ENCODE measurements at regions of chr14 and their contacts with region 1.

Region 1: DNA sequence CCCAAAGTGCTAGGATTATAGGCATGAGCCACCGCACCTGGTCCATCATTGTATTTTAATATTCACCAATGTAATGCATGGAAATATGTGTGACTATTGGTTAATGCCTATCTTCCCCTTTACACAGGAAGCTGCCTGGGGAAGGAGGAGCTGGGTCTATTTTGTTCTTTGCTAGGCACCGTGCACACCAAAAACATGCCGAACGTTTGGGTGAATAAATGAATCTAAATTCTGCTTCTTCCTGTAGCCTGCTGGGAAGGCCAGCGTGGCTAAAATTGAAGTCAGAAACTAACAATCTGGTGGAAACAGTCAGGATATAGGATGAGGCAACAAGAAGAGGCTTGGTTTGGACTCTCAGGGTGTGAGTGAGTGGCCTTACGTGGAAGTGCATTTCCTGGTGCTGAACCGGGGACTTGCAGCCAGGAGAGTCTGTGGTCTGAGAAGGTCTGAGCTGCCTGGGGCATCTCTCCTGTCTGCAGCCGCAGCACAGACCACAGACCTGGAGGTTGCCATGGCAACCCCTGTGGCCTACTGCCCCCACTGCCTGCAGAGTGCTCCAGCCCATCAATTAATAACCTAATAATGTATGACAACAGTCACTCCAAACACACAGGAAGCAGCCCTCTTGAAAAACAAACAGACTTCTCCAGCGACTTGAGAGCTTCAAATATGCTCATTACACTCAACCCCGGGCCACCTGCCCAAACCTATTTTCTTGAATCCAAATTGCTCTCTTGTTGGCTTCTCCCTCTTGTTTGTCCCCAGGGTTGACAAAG is 5.5 kb upstream of the GPR68 start:
- DNase-seq: peak; percentile 61
- H3K4me3 Mint-ChIP-seq: peak overlapping the region; percentile 70
- H3K27ac Mint-ChIP-seq: peak overlapping the region; percentile 93
- H3K4me1 Mint-ChIP-seq: peaks cover 80% of the 10 kb centered on the region
- H3K27me3 Mint-ChIP-seq: no peaks in the 10 kb centered on the region

Region 2: GRCh38 chr14:91021991-91022621 is 227.9 kb before region 1 on chr14:
- intact Hi-C with region 1: loop called (anchors 1 kb)
- DNase-seq: no peak
- H3K4me3 Mint-ChIP-seq: peak overlapping the region; percentile 76
- H3K27ac Mint-ChIP-seq: peak overlapping the region; percentile 94
- H3K4me1 Mint-ChIP-seq: peaks cover 83% of the 10 kb centered on the region
- H3K27me3 Mint-ChIP-seq: no peaks in the 10 kb centered on the region

Region 3: DNA sequence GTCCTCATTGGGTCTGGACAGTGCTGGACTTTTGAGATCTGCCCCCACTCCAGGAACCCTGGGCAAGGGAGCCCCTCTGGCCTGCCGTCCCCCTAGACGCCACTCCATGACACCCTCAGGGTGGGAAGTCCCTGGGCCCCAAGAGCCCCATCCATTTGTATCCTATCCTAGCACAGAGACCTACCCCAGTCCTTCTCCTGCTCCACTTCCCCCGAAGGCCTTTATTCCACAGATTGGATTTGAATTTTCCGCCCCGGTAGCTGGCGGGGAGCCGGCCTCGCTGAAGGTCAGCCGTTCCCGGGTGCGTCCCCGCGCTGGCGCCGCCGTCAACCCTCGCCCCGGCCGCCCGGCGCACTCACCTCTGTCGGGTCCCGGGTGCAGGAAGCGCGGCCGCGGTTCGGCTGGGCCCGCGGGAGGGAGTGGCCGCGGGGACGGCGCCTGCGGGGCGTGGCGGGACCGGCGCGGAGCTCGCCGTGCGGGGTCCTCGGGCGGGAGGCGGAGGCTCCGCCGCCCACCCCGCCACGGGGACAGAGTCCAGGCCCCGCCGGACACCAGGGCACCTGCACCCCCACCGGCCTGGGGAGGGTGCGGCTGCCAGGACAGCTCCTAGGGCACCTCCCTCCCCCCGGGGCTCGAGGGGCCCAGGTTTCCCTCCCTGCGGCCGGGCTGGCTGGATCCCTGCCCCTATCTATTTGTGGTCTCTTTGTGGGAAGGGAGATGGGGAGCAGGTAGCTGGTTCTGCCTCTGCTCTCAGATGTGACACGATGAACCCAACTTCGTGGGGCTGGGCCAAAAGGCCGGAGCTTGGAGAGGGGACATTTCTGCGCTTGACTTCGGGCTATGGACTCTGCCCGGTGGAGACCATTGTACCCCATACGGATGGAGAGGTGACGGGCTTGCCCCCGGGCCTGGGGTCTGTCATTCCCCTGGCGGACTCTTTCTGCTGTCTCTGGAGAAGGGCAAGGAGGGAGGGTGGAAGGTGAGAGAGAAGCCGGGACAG is 14.4 kb after region 1 on chr14:
- intact Hi-C with region 1: loop called (anchors 1 kb)
- DNase-seq: no peak
- H3K4me3 Mint-ChIP-seq: peak overlapping the region; percentile 72
- H3K27ac Mint-ChIP-seq: peak overlapping the region; percentile 45
- H3K4me1 Mint-ChIP-seq: peaks cover 70% of the 10 kb centered on the region
- H3K27me3 Mint-ChIP-seq: no peaks in the 10 kb centered on the region

Region 4: GRCh38 chr14:91286530-91286937 is 36.5 kb after region 1 on chr14:
- intact Hi-C with region 1: loop called (anchors 2 kb)
- DNase-seq: peak; percentile 66
- H3K4me3 Mint-ChIP-seq: no peak overlapping the region
- H3K27ac Mint-ChIP-seq: peak overlapping the region; percentile 32
- H3K4me1 Mint-ChIP-seq: peaks cover 25% of the 10 kb centered on the region
- H3K27me3 Mint-ChIP-seq: no peaks in the 10 kb centered on the region

Region 5: DNA sequence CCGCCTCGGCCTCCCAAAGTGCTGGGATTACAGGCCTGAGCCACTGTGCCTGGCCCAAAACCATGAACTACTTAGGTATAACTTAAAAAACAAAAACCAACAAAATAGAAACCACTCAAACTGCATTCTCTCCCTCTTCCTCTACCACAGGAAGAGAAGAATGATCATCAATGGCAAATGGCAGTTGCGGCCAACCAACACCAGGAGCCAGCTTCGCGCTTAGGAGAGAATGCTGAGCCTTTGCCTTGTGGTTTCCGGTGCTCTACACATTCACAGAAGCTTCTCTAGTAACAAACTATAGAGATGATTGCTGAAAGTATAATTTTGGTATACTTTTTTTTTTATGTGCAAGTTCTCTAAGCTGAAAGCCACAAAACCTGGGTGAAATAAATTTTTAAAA is 464.8 kb after region 1 on chr14:
- intact Hi-C with region 1: no loop called
- DNase-seq: peak; percentile 40
- H3K4me3 Mint-ChIP-seq: peak overlapping the region; percentile 42
- H3K27ac Mint-ChIP-seq: peak overlapping the region; percentile 70
- H3K4me1 Mint-ChIP-seq: peaks cover 16% of the 10 kb centered on the region
- H3K27me3 Mint-ChIP-seq: no peaks in the 10 kb centered on the region

Region 6: DNA sequence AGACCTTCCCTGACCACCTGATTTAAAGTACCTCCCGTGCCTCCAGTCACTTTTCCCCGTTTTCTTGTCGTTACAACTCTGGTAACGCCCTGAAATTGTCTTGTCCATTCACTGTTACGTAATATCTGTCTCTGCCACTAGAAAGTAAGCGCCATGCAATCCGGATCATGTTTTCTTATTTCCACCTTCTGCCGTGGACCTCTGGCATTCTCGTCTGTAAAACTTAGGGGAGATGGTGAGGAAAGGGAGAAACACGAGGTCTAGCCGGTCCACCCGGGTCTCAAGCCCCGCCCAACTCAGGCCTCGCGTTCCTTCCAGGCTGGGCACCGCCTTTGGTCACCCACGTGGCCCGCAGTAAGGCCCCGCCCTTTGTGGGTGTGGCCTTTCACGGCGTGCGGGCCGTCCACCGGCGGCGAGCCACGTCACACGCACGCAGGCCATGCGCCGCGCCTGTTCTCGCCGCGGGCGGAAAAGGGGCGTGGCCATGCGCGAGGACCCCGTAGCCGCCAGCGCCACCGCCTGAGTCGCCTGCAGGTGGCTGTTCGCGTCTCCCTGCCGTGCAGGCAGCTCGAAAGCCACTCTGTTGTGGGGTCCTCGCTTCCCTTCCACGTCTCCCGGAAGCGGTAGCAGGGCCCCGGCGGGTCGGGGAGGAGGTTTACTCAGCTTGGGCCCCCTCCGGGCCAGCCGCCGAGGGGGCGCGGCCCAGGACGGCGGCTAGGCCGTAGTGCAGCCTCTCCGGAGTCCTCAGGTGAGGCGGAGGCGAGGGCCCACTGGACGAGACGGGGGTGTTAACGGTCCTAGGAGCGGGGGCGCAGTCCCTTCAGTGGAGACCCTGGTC is 1543.9 kb after region 1 on chr14 and contains the start of gene GOLGA5:
- intact Hi-C with region 1: loop called (anchors 5 kb)
- DNase-seq: peak; percentile 98
- H3K4me3 Mint-ChIP-seq: peak within 1 kb of the TSS; percentile 99
- H3K27ac Mint-ChIP-seq: peak within 1 kb of the TSS; percentile 98
- H3K4me1 Mint-ChIP-seq: peaks cover 30% of the 10 kb centered on the region
- H3K27me3 Mint-ChIP-seq: no peaks in the 10 kb centered on the region
- total RNA-seq, gene GOLGA5: 22.2 and 22.6 TPM in 2 replicates

Measured in activated T-helper 1 cell treated with anti-CD3 and anti-CD28 coated beads, Interleukin-12 subunit alpha, Interleukin-12 subunit beta, Interleukin-2, Interleukin-4 antibody, amounts not matched to agents 30 ng/mL and 10 ng/mL and 1 ng/mL, durations not matched to agents 14 hours and 24 hours and 36 hours (primary cell).